Heart right ventricle (tissue), 16 donors: ENCODE measurements at regions of chr14 and their contacts with region 1.

Region 1: GRCh38 chr14:20873370-20874177 is 17.6 kb upstream of the RNASE3 start:
- DNase-seq: peak; percentile 86 to 88
- ATAC-seq: peak; percentile 89 to 99 (median 97)
- H3K4me3 ChIP-seq: peak overlapping the region in 9 of 10 donors; percentile 0 to 43 (median 34)
- H3K27ac ChIP-seq: peak overlapping the region in 1 of 10 donors; percentile 56
- H3K4me1 ChIP-seq: peaks cover 0 to 13% (median 5%) of the 10 kb centered on the region in 9 donors
- H3K27me3 ChIP-seq: peaks cover 0 to 18% (median 0%) of the 10 kb centered on the region in 7 donors
- CTCF ChIP-seq: peak; percentile 73 to 95 (median 89)

Region 2: GRCh38 chr14:20697273-20698017 is 176.1 kb before region 1 on chr14:
- intact Hi-C with region 1: loop called in 4 of 10 experiments (anchors 1 to 5 kb)
- DNase-seq: peak; percentile 37 to 48
- ATAC-seq: peak; percentile 69 to 87 (median 76)
- H3K4me3 ChIP-seq: no peak overlapping the region
- H3K27ac ChIP-seq: no peak overlapping the region
- H3K4me1 ChIP-seq: peaks cover 0 to 10% (median 0%) of the 10 kb centered on the region in 9 donors
- H3K27me3 ChIP-seq: no peaks in the 10 kb centered on the region
- CTCF ChIP-seq: peak; percentile 63 to 87 (median 82)

Region 3: GRCh38 chr14:20956376-20956976 is 82.9 kb after region 1 on chr14:
- intact Hi-C with region 1: loop called in 2 of 10 experiments (anchors 5 to 10 kb)
- DNase-seq: no peak
- ATAC-seq: no peak
- H3K4me3 ChIP-seq: no peak overlapping the region
- H3K27ac ChIP-seq: no peak overlapping the region
- H3K4me1 ChIP-seq: peaks cover 0 to 18% (median 0%) of the 10 kb centered on the region in 9 donors
- H3K27me3 ChIP-seq: peaks cover 0 to 14% (median 10%) of the 10 kb centered on the region in 7 donors
- CTCF ChIP-seq: no peak

Region 4: DNA sequence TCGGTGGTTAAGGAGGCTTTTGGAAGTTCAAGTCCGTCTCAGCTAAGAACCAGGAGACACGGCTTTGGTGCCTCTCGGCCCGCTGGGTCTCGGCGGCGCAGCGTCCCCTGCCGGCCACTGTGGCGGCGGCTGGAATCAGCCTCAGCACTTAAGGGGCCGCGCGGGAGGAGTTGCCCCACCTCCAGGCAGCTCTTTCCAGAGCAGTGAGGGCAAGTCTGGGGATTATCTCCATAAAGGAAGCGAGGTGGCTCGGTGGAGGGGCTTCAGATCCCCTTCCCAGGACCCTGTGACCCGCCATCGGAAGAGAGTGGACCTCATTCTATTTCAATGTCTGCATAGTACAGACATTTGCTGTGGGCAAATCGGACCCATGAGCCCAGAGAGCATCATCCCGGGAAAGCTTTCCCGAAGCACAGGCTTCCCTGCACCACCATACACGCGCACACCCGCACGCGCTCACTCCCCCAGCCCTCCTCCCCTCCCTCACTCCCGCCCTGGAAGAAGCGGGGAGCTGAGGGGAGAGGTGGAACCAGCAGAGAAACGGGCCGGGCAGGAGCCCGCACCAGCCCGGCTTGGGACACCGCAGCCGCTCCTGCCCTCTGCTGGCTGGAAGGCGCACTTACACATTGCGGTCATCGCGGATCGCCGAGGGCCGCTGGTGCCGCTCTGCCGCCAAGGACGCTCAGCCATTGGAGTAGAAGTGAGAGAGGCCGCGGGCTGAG is 97.6 kb after region 1 on chr14:
- intact Hi-C with region 1: loop called in 4 of 10 experiments (anchors 2 to 10 kb)
- DNase-seq: peak; percentile 83 to 87
- ATAC-seq: peak; percentile 95 to 98 (median 97)
- H3K4me3 ChIP-seq: peak overlapping the region; percentile 33 to 79 (median 68)
- H3K27ac ChIP-seq: peak overlapping the region in 9 of 10 donors; percentile 41 to 87 (median 69)
- H3K4me1 ChIP-seq: peaks cover 0 to 18% (median 8%) of the 10 kb centered on the region in 9 donors
- H3K27me3 ChIP-seq: peaks cover 0 to 7% (median 0%) of the 10 kb centered on the region in 7 donors
- CTCF ChIP-seq: peak; percentile 70 to 91 (median 78)

Region 5: DNA sequence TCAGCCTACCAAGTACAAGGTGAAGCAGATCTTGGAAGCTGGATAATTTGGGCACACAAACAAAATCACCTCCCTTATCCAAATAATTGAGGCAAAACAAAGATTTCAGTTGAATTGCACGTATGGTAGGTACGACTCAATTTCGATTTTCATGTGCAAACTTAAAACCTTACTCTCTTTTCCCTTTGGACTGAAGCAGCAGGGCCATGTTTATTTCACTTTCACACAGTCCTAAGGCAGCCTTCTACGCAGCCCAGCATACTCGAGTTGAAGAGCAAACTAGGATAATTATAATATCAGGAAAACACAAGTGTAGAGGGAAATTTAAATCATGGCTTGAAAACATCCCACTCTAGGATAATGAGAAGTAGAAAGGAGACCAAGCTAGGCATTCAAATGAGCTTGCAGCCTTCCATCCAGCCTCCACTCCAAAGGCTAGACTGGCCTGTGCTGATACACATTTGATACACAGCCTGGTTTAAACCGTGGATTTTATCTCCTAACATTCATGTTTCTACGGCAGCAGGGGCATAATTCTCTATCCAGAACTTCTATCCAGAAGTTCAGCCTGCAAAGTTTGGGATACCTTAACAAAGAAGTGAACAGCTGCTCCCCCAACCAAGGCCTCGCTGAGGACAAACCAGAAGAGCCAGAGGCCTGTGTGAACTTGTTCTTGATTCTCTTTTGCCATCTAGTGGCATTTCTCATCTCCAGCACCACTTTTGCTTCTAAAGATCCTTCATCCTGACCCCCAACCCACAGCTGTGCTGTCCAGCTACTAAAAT is 166.2 kb after region 1 on chr14:
- intact Hi-C with region 1: loop called in 1 of 10 experiments (anchors 5 kb)
- DNase-seq: peak in 1 of 2 donors; percentile 64
- ATAC-seq: peak; percentile 62 to 84 (median 72)
- H3K4me3 ChIP-seq: peak overlapping the region in 2 of 10 donors; percentile 12 to 13
- H3K27ac ChIP-seq: peak overlapping the region in 9 of 10 donors; percentile 63 to 87 (median 77)
- H3K4me1 ChIP-seq: peaks cover 13 to 53% (median 41%) of the 10 kb centered on the region in 9 donors
- H3K27me3 ChIP-seq: peaks cover 0 to under 1% (median 0%) of the 10 kb centered on the region in 7 donors
- CTCF ChIP-seq: peak; percentile 45 to 82 (median 73)